Posterior vena cava (tissue), 2 donors: ENCODE measurements at regions of chr14 and their contacts with region 1.

Region 1: GRCh38 chr14:22691171-22691570 is 47.0 kb upstream of the OR6J1 start:
- DNase-seq: no peak

Region 2: GRCh38 chr14:21014761-21015190 is 1676.4 kb before region 1 on chr14:
- intact Hi-C with region 1: no loop called
- DNase-seq: peak; percentile 91

Region 3: GRCh38 chr14:22282417-22282816 is 408.8 kb before region 1 on chr14:
- intact Hi-C with region 1: loop called in 1 of 2 experiments (anchors 5 kb)
- DNase-seq: no peak

Region 4: GRCh38 chr14:22671622-22672021 is 19.5 kb before region 1 on chr14:
- intact Hi-C with region 1: no loop called
- DNase-seq: no peak

Region 5: GRCh38 chr14:24080888-24081738 is 1389.9 kb after region 1 on chr14:
- intact Hi-C with region 1: no loop called
- DNase-seq: no peak